GM12878 (cell line): ENCODE measurements at regions of chr1 and their contacts with region 1.

Region 1: DNA sequence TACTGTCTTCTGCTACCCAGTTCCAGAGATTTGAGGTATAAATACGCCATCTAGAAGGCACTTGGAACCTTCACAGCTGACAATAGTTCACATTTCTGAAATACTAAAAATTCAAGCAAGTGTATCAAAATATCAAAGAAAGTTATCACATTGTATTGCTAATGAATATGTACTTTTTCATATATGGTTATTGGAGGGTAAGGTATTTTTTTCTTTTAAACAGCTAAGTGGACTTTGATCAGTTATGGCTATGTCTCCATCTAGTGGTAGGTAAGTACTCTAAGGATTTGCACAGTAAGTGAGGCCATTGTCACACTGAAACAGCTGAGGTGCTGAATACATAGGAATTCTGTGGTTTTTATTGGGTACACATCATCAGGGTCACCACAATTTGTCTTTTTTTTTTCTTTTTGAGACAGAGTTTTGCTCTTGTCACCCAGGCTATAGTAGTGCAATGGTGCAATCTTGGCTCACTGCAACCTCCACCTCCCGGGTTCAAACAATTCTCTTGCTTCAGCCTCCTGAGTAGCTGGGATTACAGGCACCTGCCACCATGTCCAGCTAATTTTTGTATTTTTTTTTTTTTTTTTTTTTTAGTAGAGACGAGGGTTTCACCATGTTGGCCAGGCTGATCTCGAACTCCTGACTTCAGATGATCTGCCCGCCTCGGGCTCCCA is 49.1 kb upstream of the CR2 start:
- DNase-seq: no peak
- ATAC-seq: peak; percentile 95
- H3K4me3 ChIP-seq: no peak overlapping the region
- H3K27ac ChIP-seq: no peak overlapping the region
- H3K4me1 ChIP-seq: peaks cover 10% of the 10 kb centered on the region
- H3K27me3 ChIP-seq: no peaks in the 10 kb centered on the region
- CTCF ChIP-seq: peak; percentile 62 to 81 (median 65)
- EP300 ChIP-seq: no peak
- POLR2A ChIP-seq: no peak
- RAD21 ChIP-seq: peak; percentile 85

Region 2: GRCh38 chr1:207077470-207078377 is 327.3 kb before region 1 on chr1:
- CTCF ChIA-PET with region 1: interaction called, 154 read pairs
- POLR2A ChIA-PET with region 1: no interaction called
- RAD21 ChIA-PET with region 1: interaction called, 54 read pairs
- SMC1A ChIA-PET with region 1: interaction called, 69 read pairs
- in situ Hi-C with region 1: loop called (anchors 5 kb)
- intact Hi-C with region 1: no loop called
- DNase-seq: peak; percentile 53
- ATAC-seq: peak; percentile 94
- H3K4me3 ChIP-seq: no peak overlapping the region
- H3K27ac ChIP-seq: no peak overlapping the region
- H3K4me1 ChIP-seq: no peaks in the 10 kb centered on the region
- H3K27me3 ChIP-seq: no peaks in the 10 kb centered on the region
- CTCF ChIP-seq: peak; percentile 85 to 95 (median 92); a peak in 5 of 6 replicates
- EP300 ChIP-seq: no peak
- POLR2A ChIP-seq: no peak
- RAD21 ChIP-seq: peak; percentile 94

Region 3: GRCh38 chr1:207097871-207098324 is 307.1 kb before region 1 on chr1:
- CTCF ChIA-PET with region 1: interaction called, 16 read pairs
- POLR2A ChIA-PET with region 1: no interaction called
- RAD21 ChIA-PET with region 1: interaction called, 4 read pairs
- SMC1A ChIA-PET with region 1: interaction called, 3 read pairs
- in situ Hi-C with region 1: no loop called
- intact Hi-C with region 1: no loop called
- DNase-seq: peak; percentile 67
- ATAC-seq: peak; percentile 96
- H3K4me3 ChIP-seq: no peak overlapping the region
- H3K27ac ChIP-seq: no peak overlapping the region
- H3K4me1 ChIP-seq: peaks cover 4% of the 10 kb centered on the region
- H3K27me3 ChIP-seq: no peaks in the 10 kb centered on the region
- CTCF ChIP-seq: no peak
- EP300 ChIP-seq: peak in 1 of 2 experiments; percentile 46; a peak in 1 of 4 replicates
- POLR2A ChIP-seq: no peak
- RAD21 ChIP-seq: no peak

Region 4: DNA sequence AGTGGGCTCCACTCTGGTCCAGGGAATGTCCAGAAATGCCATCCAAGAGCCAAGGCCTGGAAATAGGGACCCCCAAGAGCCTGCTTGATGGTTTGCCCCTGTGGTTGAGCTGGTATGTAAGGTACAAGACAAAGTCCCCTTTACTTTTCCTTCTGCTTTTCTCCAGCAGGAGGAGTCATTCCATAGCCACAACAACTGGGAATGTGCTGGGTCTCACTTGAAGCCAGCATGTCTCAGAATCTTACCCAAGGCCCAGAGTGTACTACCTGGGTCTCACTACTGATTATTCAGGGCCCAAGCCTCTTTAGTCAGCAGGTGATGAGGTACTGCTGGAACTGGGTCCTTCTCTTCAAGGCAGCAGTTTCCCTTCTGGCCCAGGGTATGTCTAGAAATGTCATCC is 145.6 kb before region 1 on chr1:
- CTCF ChIA-PET with region 1: interaction called, 11 read pairs
- POLR2A ChIA-PET with region 1: no interaction called
- RAD21 ChIA-PET with region 1: interaction called, 7 read pairs
- SMC1A ChIA-PET with region 1: interaction called, 5 read pairs
- in situ Hi-C with region 1: no loop called
- intact Hi-C with region 1: no loop called
- DNase-seq: no peak
- ATAC-seq: no peak
- H3K4me3 ChIP-seq: no peak overlapping the region
- H3K27ac ChIP-seq: no peak overlapping the region
- H3K4me1 ChIP-seq: no peaks in the 10 kb centered on the region
- H3K27me3 ChIP-seq: no peaks in the 10 kb centered on the region; a peak in 2 of 4 replicates
- CTCF ChIP-seq: peak in 1 of 3 experiments; percentile 6; a peak in 1 of 6 replicates
- EP300 ChIP-seq: no peak
- POLR2A ChIP-seq: no peak
- RAD21 ChIP-seq: no peak

Region 5: DNA sequence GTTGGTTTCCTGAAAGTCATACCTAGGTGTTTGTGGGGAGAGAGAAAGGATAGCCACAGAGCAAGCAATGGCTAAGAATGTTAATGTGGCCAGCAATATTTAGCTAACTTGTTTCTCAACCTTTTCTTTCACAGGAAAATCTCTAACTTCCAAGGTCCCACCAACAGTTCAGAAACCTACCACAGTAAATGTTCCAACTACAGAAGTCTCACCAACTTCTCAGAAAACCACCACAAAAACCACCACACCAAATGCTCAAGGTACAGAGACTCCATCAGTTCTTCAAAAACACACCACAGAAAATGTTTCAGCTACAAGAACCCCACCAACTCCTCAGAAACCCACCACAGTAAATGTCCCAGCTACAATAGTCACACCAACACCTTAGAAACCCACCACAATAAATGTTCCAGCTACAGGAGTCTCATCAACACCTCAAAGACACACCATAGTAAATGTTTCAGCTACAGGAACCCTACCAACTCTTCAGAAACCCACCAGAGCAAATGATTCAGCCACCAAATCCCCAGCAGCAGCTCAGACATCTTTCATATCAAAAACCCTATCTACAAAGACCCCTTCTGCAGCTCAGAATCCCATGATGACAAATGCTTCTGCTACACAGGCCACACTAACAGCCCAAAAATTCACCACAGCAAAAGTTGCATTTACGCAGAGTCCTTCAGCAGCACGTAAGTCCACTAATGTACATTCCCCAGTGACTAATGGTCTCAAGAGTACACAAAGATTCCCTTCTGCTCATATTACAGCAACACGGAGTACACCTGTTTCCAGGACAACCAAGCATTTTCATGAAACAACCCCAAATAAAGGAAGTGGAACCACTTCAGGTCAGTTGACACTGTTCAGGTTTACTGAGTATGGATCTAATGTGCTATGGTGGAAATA is 68.2 kb before region 1 on chr1:
- CTCF ChIA-PET with region 1: interaction called, 6 read pairs
- POLR2A ChIA-PET with region 1: no interaction called
- RAD21 ChIA-PET with region 1: interaction called, 13 read pairs
- SMC1A ChIA-PET with region 1: interaction called, 11 read pairs
- in situ Hi-C with region 1: no loop called
- intact Hi-C with region 1: no loop called
- DNase-seq: peak; percentile 91
- ATAC-seq: peak; percentile 78
- H3K4me3 ChIP-seq: peak overlapping the region; percentile 1; the same call in 1 of the 2 replicates
- H3K27ac ChIP-seq: peak overlapping the region; percentile 81
- H3K4me1 ChIP-seq: peaks cover 47% of the 10 kb centered on the region
- H3K27me3 ChIP-seq: no peaks in the 10 kb centered on the region
- CTCF ChIP-seq: no peak
- EP300 ChIP-seq: peak; percentile 72 to 89; a peak in 3 of 4 replicates
- POLR2A ChIP-seq: no peak
- RAD21 ChIP-seq: no peak

Region 6: DNA sequence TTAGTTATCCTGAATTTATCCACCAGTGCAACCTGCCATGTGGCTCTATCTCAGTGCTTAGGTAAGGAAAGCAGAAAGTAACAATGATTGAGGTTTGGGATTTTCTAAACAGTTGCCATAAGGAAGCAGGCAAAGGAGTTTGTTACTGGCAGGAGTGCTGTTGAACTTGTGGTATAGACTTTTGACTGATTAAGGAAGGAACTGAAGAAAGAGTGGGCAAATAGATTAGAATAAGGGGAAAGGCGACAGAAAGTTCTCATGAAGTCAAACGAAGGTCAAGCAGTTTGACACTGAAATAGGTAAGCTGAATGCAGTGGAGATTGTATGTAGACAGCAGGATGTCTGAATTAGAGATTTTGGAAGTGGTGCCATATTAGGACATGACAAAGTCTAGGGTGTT is 25.0 kb after region 1 on chr1:
- CTCF ChIA-PET with region 1: interaction called, 12 read pairs
- POLR2A ChIA-PET with region 1: no interaction called
- RAD21 ChIA-PET with region 1: interaction called, 11 read pairs
- SMC1A ChIA-PET with region 1: interaction called, 17 read pairs
- in situ Hi-C with region 1: no loop called
- intact Hi-C with region 1: no loop called
- DNase-seq: peak; percentile 70
- ATAC-seq: peak; percentile 58
- H3K4me3 ChIP-seq: no peak overlapping the region
- H3K27ac ChIP-seq: peak overlapping the region; percentile 19
- H3K4me1 ChIP-seq: peaks cover 39% of the 10 kb centered on the region
- H3K27me3 ChIP-seq: no peaks in the 10 kb centered on the region
- CTCF ChIP-seq: no peak
- EP300 ChIP-seq: no peak
- POLR2A ChIP-seq: no peak
- RAD21 ChIP-seq: 0 out of 2 replicates have a peak, but pooled peaks have one; percentile 11

Region 7: GRCh38 chr1:207581496-207582168 is 176.6 kb after region 1 on chr1:
- CTCF ChIA-PET with region 1: no interaction called
- POLR2A ChIA-PET with region 1: no interaction called
- RAD21 ChIA-PET with region 1: no interaction called
- SMC1A ChIA-PET with region 1: no interaction called
- in situ Hi-C with region 1: no loop called
- intact Hi-C with region 1: no loop called
- DNase-seq: no peak
- ATAC-seq: no peak
- H3K4me3 ChIP-seq: no peak overlapping the region
- H3K27ac ChIP-seq: no peak overlapping the region
- H3K4me1 ChIP-seq: no peaks in the 10 kb centered on the region
- H3K27me3 ChIP-seq: no peaks in the 10 kb centered on the region
- CTCF ChIP-seq: no peak
- EP300 ChIP-seq: no peak
- POLR2A ChIP-seq: no peak
- RAD21 ChIP-seq: no peak